ENCODE measurements at regions of chr7 and their contacts with region 1.

Region 1: DNA sequence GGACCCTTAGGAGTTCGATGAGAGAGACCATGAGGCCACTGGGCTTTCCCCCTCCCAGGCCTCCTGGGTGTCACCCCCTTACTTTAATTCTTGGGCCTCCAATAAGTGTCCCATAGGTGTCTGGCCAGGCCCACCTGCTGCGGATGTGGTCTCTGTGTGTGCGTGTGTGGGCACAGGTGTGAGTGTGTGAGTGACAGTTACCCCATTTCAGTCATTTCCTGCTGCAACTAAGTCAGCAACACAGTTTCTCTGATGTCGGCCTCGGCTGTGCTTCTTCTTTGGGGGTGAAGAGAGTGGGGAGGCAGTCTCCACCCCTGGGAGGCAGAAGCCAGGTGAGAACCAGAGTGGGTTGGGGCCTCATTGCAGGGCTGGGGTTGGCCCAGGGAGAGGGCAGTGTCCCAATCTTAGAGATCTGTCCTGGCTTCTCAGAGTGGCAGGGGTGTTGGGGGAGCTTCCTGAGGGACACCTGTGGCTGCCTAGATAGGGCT is 1.5 kb downstream of the PVRIG start:
- DNase-seq: peak; percentile 86
- H3K4me3 Mint-ChIP-seq: peak overlapping the region; percentile 87
- H3K27ac Mint-ChIP-seq: peak overlapping the region; percentile 99
- H3K4me1 Mint-ChIP-seq: peaks cover 65% of the 10 kb centered on the region
- H3K27me3 Mint-ChIP-seq: no peaks in the 10 kb centered on the region

Region 2: GRCh38 chr7:100126931-100127865 is 94.1 kb before region 1 on chr7 and contains the start of gene MBLAC1:
- CTCF ChIA-PET with region 1: interaction called, 64 read pairs
- POLR2A ChIA-PET with region 1: interaction called, 11 read pairs
- DNase-seq: peak; percentile 92
- H3K4me3 Mint-ChIP-seq: peak within 1 kb of the TSS; percentile 100
- H3K27ac Mint-ChIP-seq: peak within 1 kb of the TSS; percentile 100
- H3K4me1 Mint-ChIP-seq: peaks cover 37% of the 10 kb centered on the region
- H3K27me3 Mint-ChIP-seq: no peaks in the 10 kb centered on the region
- total RNA-seq, gene MBLAC1: 3.4 to 4.1 TPM

Region 3: DNA sequence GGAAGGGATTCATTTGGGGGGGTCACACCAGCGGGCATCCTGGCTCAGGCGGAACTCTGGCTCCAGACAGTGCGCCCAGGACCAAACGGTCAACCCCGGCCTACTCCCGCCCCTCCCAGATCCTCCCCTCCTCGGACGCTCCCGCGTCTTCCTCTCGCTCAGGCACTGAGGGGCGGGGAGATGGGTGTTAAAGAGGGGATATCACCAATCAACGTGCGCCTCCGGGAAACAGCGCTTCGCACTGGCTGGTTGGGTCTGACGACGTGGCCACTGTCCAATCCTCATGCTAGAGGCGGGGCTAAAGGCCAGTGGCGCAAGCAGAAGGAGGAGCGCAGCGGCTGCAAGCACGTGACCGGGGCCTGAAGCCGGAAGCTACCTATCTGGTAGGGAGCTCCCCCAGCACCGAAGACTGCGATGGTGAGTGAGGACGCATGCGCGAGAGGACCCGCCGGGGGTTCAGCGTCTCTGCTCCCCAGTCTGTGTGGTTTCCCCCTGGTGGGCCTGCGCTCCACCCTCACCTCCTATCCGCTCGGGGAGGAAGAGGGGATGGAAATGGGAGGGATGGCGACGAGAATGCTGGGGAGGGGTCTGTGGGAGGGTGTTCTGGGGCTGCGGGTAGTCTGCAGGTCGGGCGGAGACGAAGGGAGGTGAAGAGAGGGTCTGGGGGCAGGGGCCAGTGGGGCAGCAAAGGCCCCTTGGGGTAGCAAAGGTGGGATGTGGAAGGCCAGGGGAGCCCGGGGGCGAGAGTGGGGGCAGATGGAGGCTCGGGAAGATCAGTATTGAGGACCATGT is 72.5 kb before region 1 on chr7 and contains the start of gene LAMTOR4:
- CTCF ChIA-PET with region 1: interaction called, 11 read pairs
- POLR2A ChIA-PET with region 1: interaction called, 8 read pairs
- DNase-seq: peak; percentile 99
- H3K4me3 Mint-ChIP-seq: peak within 1 kb of the TSS; percentile 96
- H3K27ac Mint-ChIP-seq: peak within 1 kb of the TSS; percentile 92
- H3K4me1 Mint-ChIP-seq: peaks cover 37% of the 10 kb centered on the region
- H3K27me3 Mint-ChIP-seq: no peaks in the 10 kb centered on the region
- total RNA-seq, gene LAMTOR4: 164 to 167 TPM

Region 4: DNA sequence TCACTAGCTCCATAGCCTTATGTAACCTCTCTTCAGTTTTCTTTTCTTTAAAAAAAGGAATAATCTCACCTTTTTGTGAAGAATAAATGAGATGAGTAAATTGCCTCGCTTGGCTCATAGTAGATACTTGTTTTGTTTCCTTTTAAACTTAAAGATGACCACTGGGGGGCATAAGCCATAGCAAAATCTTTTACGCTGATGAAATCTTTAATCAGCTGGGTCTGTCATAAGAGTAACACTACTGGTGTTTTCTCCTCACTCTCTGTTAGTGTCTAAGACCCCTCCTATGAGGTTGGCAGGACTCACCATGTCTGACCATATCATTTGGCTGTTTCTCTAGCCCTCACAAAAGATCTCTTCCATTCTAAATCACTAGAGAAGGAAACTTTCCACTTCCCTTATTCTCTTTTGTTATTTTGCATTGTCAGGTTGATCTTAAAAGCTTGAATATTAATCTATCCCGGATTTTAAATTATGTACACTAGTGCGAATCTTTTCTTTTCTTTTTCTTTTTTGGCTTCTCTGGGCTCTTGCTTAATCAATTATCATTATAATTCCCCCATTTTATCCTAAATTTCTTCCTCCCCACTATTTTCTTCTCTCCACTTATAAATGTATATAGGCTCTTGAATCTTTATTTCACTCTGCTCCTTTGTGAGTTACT is 31.1 kb before region 1 on chr7:
- CTCF ChIA-PET with region 1: interaction called, 22 read pairs
- POLR2A ChIA-PET with region 1: interaction called, 9 read pairs
- DNase-seq: no peak
- H3K4me3 Mint-ChIP-seq: no peak overlapping the region
- H3K27ac Mint-ChIP-seq: peak overlapping the region; percentile 50
- H3K4me1 Mint-ChIP-seq: peaks cover 16% of the 10 kb centered on the region
- H3K27me3 Mint-ChIP-seq: no peaks in the 10 kb centered on the region

Region 5: DNA sequence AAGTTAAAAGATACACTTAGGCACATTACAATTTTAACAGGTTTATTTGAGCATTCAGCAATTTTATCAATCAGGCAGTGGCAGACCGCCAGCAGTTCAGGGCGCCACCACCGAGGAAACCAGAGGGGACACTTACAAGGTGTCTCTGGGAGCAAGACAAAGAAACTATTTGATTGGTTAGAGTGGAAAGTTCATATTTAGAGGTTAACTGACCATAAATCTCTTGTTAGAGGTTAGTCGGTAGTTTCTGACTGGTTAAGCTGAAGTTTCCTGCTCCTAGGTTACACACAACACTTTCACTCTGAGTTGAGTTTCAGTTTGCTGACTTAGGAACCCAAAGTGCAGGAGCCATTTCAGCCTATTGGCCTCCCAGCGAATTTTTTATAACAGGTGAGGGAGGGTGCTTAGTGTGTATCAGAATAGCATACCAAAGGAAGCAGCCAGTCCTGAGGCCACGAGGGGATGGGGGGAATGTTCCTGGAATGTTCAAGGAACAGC is 12.3 kb before region 1 on chr7:
- CTCF ChIA-PET with region 1: interaction called, 15 read pairs
- POLR2A ChIA-PET with region 1: interaction called, 35 read pairs
- DNase-seq: peak; percentile 72
- H3K4me3 Mint-ChIP-seq: peak overlapping the region; percentile 40
- H3K27ac Mint-ChIP-seq: peak overlapping the region; percentile 68
- H3K4me1 Mint-ChIP-seq: peaks cover 44% of the 10 kb centered on the region
- H3K27me3 Mint-ChIP-seq: no peaks in the 10 kb centered on the region

Region 6: DNA sequence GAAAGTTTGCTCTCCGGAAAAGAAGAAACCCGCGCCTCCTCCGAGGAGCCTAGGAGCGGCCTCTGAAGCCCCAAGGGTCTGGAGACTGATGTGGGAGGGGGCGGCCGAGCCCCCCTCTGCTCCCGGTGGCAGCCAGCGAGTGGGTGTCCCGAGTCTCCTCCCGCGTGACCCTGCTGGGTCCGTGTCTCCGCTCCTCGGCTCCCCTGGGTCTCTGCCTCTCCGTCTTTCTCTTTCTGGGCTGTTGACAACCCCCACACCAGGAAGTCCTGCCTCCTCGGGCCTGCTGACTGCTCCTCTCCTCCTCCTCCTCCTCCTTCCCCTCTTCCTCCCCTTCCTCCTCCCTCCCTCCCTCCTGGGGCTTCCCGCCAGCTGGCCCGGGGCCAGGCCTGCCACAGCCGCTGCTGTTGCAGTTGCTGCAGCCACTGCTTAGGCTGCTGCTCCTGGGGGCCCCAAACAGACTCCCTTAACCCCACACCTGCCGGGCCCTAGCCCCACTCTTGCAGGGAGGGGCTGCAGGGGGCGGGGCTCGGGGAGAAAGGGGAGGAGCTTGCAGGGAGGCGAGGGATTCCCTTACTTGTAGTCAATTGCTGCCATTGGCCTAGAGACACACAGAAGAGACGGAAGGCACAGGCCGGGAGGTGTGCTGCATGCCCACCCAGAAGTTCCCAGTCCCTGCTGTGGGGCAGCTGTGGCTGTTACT is 257.8 kb after region 1 on chr7 and contains the start of gene TSC22D4:
- CTCF ChIA-PET with region 1: no interaction called
- POLR2A ChIA-PET with region 1: no interaction called
- DNase-seq: peak; percentile 91
- H3K4me3 Mint-ChIP-seq: peak within 1 kb of the TSS; percentile 99
- H3K27ac Mint-ChIP-seq: peak within 1 kb of the TSS; percentile 93
- H3K4me1 Mint-ChIP-seq: peaks cover 40% of the 10 kb centered on the region
- H3K27me3 Mint-ChIP-seq: no peaks in the 10 kb centered on the region
- total RNA-seq, gene TSC22D4: 133 to 136 TPM